ENCODE measurements at regions of chr19 and their contacts with region 1.

Region 1: DNA sequence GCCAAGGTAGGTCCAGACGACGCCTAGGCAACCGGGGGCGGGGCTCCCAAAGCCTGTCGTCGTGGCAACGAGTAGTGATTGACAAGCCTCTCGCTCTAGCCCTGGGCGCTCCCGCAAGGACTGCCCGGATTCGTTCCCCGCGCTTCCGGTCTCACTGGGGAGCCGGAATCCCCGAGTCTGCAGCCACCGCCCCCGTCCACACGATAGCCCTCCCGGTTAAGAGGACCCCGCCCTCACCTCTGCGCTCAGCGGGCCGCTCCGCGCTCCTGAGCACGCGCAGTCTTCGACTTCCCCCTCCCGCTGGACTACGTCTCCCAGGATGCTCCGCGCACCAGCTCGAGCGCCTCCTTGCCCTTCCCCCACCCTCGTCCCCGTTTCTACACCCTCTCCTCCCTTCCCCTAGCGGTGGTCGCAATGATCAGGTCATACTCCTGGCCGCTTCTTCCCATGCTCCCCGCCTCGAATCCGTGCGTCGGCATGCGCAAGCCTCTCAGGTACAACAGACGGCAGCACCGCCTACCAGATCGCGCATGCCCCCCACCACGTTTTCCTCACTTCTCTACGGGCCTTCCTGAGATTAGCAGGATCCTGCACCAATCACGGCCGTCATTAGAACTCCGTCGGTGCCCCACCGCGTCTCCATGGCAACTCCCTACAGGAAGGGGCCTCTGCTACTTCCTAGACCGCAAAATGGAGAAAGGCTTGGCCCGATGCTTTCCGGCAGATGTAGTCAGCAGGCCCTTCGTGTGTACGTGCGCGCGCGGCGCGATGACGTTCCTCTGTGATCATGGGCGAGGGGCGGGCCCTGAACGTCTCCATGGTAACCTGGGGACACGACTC is at the start of gene MZF1:
- DNase-seq: peak; percentile 99 to 100 (median 100)
- ATAC-seq: peak; percentile 77 to 87 (median 84)
- H3K4me3 ChIP-seq: peak within 1 kb of the TSS; percentile 36 to 89 (median 77)
- H3K27ac ChIP-seq: peak within 1 kb of the TSS; percentile 88 to 99 (median 96)
- H3K4me1 ChIP-seq: peaks cover 3 to 38% (median 17%) of the 10 kb centered on the region in 12 donors
- H3K27me3 ChIP-seq: no peaks in the 10 kb centered on the region
- CTCF ChIP-seq: peak in 3 of 12 donors; percentile 7 to 30 (median 12)
- POLR2A ChIP-seq: peak in 1 of 2 donors; percentile 31
- total RNA-seq, gene MZF1: 7.5 to 12.0 (median 9.1) TPM

Region 2: DNA sequence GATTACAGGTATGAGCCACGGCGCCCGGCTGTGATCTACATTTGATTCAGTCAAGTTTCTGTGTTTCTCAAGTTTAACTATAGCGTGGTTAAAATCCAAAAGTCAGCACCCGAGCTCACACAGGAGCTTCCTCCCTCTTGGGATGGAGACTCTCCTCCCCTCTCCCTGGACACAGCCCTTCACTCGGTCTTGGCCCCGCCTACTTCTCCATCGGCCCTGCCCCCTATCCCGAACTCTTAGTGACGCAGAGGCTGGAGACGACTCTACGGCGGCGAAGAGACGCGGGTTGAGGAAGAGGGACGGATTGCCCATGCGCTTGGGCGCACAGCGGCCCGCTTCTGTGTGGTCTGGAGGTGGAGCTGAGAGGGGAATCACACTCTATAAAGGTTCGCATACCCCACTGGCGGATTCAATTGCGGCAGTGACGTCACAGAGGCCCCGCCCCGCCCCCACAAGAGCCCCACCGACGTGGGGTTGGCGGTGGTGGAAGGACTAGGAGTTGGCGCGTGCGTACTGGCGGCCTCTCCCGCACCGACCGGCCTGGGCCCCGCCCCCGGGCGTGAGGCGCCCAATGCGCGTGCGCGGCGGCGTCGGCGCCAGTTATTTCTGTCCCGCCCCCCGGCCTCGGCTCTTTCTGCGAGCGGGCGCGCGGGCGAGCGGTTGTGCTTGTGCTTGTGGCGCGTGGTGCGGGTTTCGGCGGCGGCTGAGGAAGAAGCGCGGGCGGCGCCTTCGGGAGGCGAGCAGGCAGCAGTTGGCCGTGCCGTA is 29.0 kb before region 1 on chr19 and contains the start of gene TRIM28:
- intact Hi-C with region 1: loop called in 2 of 10 experiments (anchors 1 kb)
- DNase-seq: peak; percentile 98 to 100 (median 98)
- ATAC-seq: peak; percentile 97 to 98 (median 97)
- H3K4me3 ChIP-seq: peak within 1 kb of the TSS; percentile 78 to 100 (median 92)
- H3K27ac ChIP-seq: peak within 1 kb of the TSS; percentile 87 to 98 (median 96)
- H3K4me1 ChIP-seq: peaks cover 12 to 36% (median 25%) of the 10 kb centered on the region in 12 donors
- H3K27me3 ChIP-seq: no peaks in the 10 kb centered on the region
- CTCF ChIP-seq: no peak
- POLR2A ChIP-seq: peak; percentile 55 to 96
- total RNA-seq, gene TRIM28: 122 to 265 (median 163) TPM